B cell (primary cell): ENCODE measurements at regions of chr1 and their contacts with region 1.

Region 1: DNA sequence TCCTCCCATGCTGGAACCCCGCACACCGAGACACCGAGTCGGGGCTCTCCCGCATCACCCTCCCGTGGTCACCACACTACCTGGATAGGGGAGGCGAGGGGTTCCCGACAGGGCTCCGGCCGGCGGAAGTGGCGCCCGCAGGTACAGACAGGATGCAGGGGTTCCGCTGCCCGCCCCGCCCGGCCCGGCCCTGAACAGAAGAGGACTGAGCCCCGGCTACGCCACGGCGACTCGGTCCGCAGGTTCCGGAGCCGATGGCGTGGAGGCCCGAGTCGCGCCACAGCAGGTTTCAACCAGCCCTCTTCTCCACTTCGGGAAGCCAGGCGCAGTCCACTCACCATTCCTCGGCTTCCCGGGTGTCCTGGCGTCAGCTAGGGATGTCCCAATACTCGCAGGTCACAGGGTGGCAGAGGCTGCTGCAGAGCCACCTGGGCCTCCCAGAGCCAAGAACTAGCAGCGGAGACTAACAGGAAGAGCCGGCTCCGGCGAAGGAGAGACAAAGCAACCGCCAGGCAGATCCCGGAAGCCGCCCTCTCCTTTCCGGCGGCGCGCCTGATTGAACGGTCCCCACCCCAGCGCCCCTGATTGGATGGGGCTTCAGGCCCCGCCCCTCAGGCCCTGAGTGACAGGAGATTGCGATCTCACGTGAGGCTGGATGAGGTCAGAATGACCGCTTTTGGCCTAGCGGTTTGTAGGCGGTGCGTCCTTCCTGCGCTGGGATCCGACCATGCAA is at the start of gene ZNF669:
- DNase-seq: peak; percentile 96
- ATAC-seq: peak; percentile 99
- H3K4me3 ChIP-seq: peak within 1 kb of the TSS; percentile 78 to 98 (median 87)
- H3K4me3 Mint-ChIP-seq: peak within 1 kb of the TSS; percentile 95
- H3K27ac ChIP-seq: peak within 1 kb of the TSS; percentile 80 to 90
- H3K27ac Mint-ChIP-seq: peak within 1 kb of the TSS; percentile 89
- H3K4me1 ChIP-seq: peaks cover 6 to 17% of the 10 kb centered on the region in 2 donors
- H3K4me1 Mint-ChIP-seq: peaks cover 19% of the 10 kb centered on the region
- H3K27me3 ChIP-seq: peaks cover 0 to 14% (median 6%) of the 10 kb centered on the region in 4 experiments
- H3K27me3 Mint-ChIP-seq: peaks cover 23% of the 10 kb centered on the region
- CTCF ChIP-seq: no peak
- total RNA-seq, gene ZNF669: 20.8 and 21.3 TPM in 2 replicates

Region 2: GRCh38 chr1:247078261-247079140 is 25.5 kb before region 1 on chr1 and contains the start of gene ZNF670:
- CTCF ChIA-PET with region 1: interaction called, 3 read pairs
- POLR2A ChIA-PET with region 1: interaction called, 13 read pairs
- intact Hi-C with region 1: loop called (anchors 1 kb)
- DNase-seq: peak; percentile 86
- ATAC-seq: peak; percentile 98
- H3K4me3 ChIP-seq: peak within 1 kb of the TSS; percentile 60 to 99 (median 93)
- H3K4me3 Mint-ChIP-seq: peak within 1 kb of the TSS; percentile 93
- H3K27ac ChIP-seq: peak within 1 kb of the TSS; percentile 61 to 80
- H3K27ac Mint-ChIP-seq: peak within 1 kb of the TSS; percentile 79
- H3K4me1 ChIP-seq: peaks cover 11 to 20% of the 10 kb centered on the region in 2 donors
- H3K4me1 Mint-ChIP-seq: peaks cover 25% of the 10 kb centered on the region
- H3K27me3 ChIP-seq: no peaks in the 10 kb centered on the region
- H3K27me3 Mint-ChIP-seq: peaks cover 3% of the 10 kb centered on the region
- CTCF ChIP-seq: no peak
- total RNA-seq, gene ZNF670: 4.4 and 4.6 TPM in 2 replicates

Region 3: GRCh38 chr1:247165674-247166073 is 61.6 kb after region 1 on chr1:
- CTCF ChIA-PET with region 1: no interaction called
- POLR2A ChIA-PET with region 1: no interaction called
- intact Hi-C with region 1: loop called (anchors 10 kb)
- DNase-seq: no peak
- ATAC-seq: no peak
- H3K4me3 ChIP-seq: no peak overlapping the region
- H3K4me3 Mint-ChIP-seq: no peak overlapping the region
- H3K27ac ChIP-seq: no peak overlapping the region
- H3K27ac Mint-ChIP-seq: no peak overlapping the region
- H3K4me1 ChIP-seq: no peaks in the 10 kb centered on the region
- H3K4me1 Mint-ChIP-seq: peaks cover 27% of the 10 kb centered on the region
- H3K27me3 ChIP-seq: no peaks in the 10 kb centered on the region
- H3K27me3 Mint-ChIP-seq: no peaks in the 10 kb centered on the region
- CTCF ChIP-seq: no peak

Region 4: GRCh38 chr1:247551721-247552120 is 447.7 kb after region 1 on chr1:
- CTCF ChIA-PET with region 1: no interaction called
- POLR2A ChIA-PET with region 1: no interaction called
- intact Hi-C with region 1: no loop called
- DNase-seq: no peak
- ATAC-seq: no peak
- H3K4me3 ChIP-seq: no peak overlapping the region
- H3K4me3 Mint-ChIP-seq: no peak overlapping the region
- H3K27ac ChIP-seq: no peak overlapping the region
- H3K27ac Mint-ChIP-seq: no peak overlapping the region
- H3K4me1 ChIP-seq: peaks cover 3 to 6% of the 10 kb centered on the region in 2 donors
- H3K4me1 Mint-ChIP-seq: peaks cover 6% of the 10 kb centered on the region
- H3K27me3 ChIP-seq: peaks cover 0 to 6% (median 0%) of the 10 kb centered on the region in 4 experiments
- H3K27me3 Mint-ChIP-seq: peaks cover 18% of the 10 kb centered on the region
- CTCF ChIP-seq: no peak